IMR-90 (cell line): ENCODE measurements at regions of chrX and their contacts with region 1.

Region 1: GRCh38 chrX:74343343-74344279 is 39.6 kb downstream of the ZCCHC13 start:
- DNase-seq: peak; percentile 97
- ATAC-seq: peak; percentile 99
- H3K4me3 ChIP-seq: no peak overlapping the region
- H3K27ac ChIP-seq: no peak overlapping the region
- H3K4me1 ChIP-seq: 0 out of 2 replicates have a peak, but pooled peaks cover 2% of the 10 kb centered on the region
- H3K27me3 ChIP-seq: no peaks in the 10 kb centered on the region
- CTCF ChIP-seq: peak; percentile 67
- POLR2A ChIP-seq: no peak
- RAD21 ChIP-seq: peak; percentile 70

Region 2: GRCh38 chrX:74015379-74016019 is 328.1 kb before region 1 on chrX:
- CTCF ChIA-PET with region 1: no interaction called
- POLR2A ChIA-PET with region 1: no interaction called
- dilution Hi-C with region 1: no loop called
- in situ Hi-C with region 1: no loop called
- intact Hi-C with region 1: loop called (anchors 10 kb)
- DNase-seq: peak; percentile 77
- ATAC-seq: peak; percentile 90
- H3K4me3 ChIP-seq: no peak overlapping the region
- H3K27ac ChIP-seq: no peak overlapping the region
- H3K4me1 ChIP-seq: no peaks in the 10 kb centered on the region
- H3K27me3 ChIP-seq: no peaks in the 10 kb centered on the region
- CTCF ChIP-seq: peak; percentile 97
- POLR2A ChIP-seq: 0 out of 2 replicates have a peak, but pooled peaks have one; percentile 27
- RAD21 ChIP-seq: peak; percentile 98

Region 3: GRCh38 chrX:74234818-74235217 is 108.8 kb before region 1 on chrX:
- CTCF ChIA-PET with region 1: no interaction called
- POLR2A ChIA-PET with region 1: no interaction called
- dilution Hi-C with region 1: no loop called
- in situ Hi-C with region 1: no loop called
- intact Hi-C with region 1: loop called (anchors 5 kb)
- DNase-seq: no peak
- ATAC-seq: no peak
- H3K4me3 ChIP-seq: no peak overlapping the region
- H3K27ac ChIP-seq: no peak overlapping the region
- H3K4me1 ChIP-seq: no peaks in the 10 kb centered on the region
- H3K27me3 ChIP-seq: no peaks in the 10 kb centered on the region
- CTCF ChIP-seq: no peak
- POLR2A ChIP-seq: no peak
- RAD21 ChIP-seq: no peak

Region 4: DNA sequence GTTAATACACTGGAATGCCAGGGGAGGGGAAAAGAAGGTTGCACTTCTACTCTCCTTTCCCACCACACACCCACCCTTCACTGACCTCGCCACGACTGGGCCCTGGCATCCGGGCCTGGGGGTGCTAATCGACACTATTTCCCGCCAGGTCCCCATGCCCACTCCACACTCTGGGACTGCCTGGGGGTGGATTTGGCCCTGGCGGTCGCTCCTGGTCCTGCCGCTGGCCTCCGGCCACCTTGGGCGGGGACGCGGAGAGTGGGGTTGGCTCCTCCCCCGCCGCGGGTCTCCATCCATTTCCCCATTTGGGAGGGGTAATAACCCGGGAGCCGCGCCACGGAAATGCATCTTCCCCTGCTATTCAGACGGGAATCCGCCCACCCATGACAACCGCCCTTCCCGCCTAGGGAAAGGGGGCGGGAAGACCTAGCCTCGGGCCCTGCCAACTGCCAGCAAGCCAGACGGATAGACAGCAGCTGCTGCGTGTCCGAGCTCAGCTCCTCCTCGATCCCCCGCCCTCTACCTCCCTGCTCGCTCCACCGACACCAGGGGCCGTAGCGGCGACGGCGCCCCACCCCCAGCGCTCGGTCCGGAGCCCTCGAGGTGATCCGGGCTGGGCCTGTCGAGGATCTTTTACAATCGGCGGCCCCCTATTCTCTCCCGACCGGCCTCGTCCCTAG is 192.7 kb after region 1 on chrX:
- CTCF ChIA-PET with region 1: no interaction called
- POLR2A ChIA-PET with region 1: no interaction called
- dilution Hi-C with region 1: no loop called
- in situ Hi-C with region 1: no loop called
- intact Hi-C with region 1: loop called (anchors 1 kb)
- DNase-seq: peak; percentile 83
- ATAC-seq: peak; percentile 73
- H3K4me3 ChIP-seq: peak overlapping the region; percentile 38
- H3K27ac ChIP-seq: peak overlapping the region; percentile 83
- H3K4me1 ChIP-seq: peaks cover 6% of the 10 kb centered on the region; the same call in 1 of the 2 replicates
- H3K27me3 ChIP-seq: no peaks in the 10 kb centered on the region
- CTCF ChIP-seq: peak; percentile 37
- POLR2A ChIP-seq: 0 out of 2 replicates have a peak, but pooled peaks have one; percentile 16
- RAD21 ChIP-seq: no peak